Activated CD8-positive, alpha-beta T cell treated with anti-CD3 and anti-CD28 coated beads for 36 hours (primary cell): ENCODE measurements at regions of chr7 and their contacts with region 1.

Region 1: DNA sequence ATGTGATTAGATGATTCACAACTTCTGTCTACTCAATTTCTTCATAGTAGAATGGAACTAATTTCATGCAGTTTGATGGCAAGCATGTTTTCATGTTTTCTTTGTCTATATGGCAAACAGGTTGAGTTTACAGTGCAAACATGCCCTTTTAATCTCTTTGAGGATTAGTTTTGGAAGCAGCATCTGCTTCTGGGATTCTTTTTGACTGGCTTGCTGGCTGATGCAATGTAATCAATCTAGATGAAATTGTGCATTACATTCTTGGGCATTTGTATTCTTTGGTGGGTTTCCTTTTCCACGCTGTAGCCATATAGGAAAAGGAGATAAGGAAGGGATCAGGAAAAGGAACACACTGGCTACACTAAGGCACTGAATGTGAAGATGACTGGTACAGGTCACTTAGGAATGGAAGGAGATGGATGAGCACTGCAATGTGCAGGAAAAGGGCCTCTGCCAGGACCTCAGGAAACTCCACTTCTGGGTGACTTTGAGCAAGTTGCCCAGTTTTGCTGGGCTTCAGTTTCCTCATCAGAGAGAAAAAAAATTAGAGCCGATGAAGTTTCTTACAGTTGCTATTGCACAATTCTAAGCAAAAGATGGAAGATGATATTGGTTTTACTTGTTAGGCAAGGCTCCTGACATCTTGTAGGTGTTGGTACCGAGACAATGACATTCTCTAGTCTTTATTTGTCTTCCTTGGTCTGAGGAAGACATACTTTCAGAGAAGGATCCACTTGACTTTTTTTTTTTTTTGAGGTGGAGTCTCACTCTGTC is 269.1 kb downstream of the SUGCT start:
- DNase-seq: no peak
- ATAC-seq: no peak
- H3K4me3 Mint-ChIP-seq: no peak overlapping the region
- H3K27ac Mint-ChIP-seq: no peak overlapping the region
- H3K4me1 Mint-ChIP-seq: no peaks in the 10 kb centered on the region
- H3K27me3 Mint-ChIP-seq: no peaks in the 10 kb centered on the region
- CTCF ChIP-seq: no peak

Region 2: GRCh38 chr7:40267583-40267982 is 136.3 kb before region 1 on chr7:
- CTCF ChIA-PET with region 1: no interaction called
- POLR2A ChIA-PET with region 1: no interaction called
- intact Hi-C with region 1: no loop called
- DNase-seq: no peak
- ATAC-seq: no peak
- H3K4me3 Mint-ChIP-seq: no peak overlapping the region
- H3K27ac Mint-ChIP-seq: no peak overlapping the region
- H3K4me1 Mint-ChIP-seq: peaks cover 14% of the 10 kb centered on the region
- H3K27me3 Mint-ChIP-seq: peaks cover 2% of the 10 kb centered on the region
- CTCF ChIP-seq: no peak

Region 3: DNA sequence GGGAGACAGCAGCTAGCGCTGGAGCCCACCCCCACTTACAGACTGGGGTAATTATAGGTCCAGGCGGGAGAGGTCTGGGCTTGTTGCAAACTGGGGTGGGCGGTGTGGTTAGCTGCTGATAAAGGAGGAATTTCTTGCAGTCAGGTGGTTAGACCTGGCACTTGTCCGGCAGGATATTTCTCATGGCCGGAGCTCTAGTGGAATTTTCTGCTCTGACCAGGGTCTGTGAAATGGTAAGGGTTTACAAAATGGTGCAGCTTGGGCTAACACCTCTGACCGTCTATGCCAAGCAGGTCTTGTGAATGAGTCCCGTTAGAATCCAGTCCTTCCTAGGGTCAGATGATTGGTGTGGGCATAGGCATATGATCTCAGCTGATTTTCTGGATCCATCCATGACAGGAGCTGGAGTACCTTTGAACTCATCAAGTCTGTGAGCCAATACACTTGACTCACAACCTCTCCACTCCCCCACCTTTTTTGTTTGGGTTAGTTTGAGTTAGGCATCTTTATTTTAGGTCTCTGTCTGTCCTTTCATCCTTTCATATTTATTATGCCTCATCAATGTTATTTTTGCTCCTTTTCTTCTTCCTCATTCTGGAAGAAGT is 55.7 kb before region 1 on chr7:
- CTCF ChIA-PET with region 1: no interaction called
- POLR2A ChIA-PET with region 1: no interaction called
- intact Hi-C with region 1: loop called (anchors 10 kb)
- DNase-seq: no peak
- ATAC-seq: no peak
- H3K4me3 Mint-ChIP-seq: no peak overlapping the region
- H3K27ac Mint-ChIP-seq: no peak overlapping the region
- H3K4me1 Mint-ChIP-seq: no peaks in the 10 kb centered on the region
- H3K27me3 Mint-ChIP-seq: no peaks in the 10 kb centered on the region
- CTCF ChIP-seq: no peak